Gastrocnemius medialis (tissue), 4 donors: ENCODE measurements at regions of chr1 and their contacts with region 1.

Region 1: DNA sequence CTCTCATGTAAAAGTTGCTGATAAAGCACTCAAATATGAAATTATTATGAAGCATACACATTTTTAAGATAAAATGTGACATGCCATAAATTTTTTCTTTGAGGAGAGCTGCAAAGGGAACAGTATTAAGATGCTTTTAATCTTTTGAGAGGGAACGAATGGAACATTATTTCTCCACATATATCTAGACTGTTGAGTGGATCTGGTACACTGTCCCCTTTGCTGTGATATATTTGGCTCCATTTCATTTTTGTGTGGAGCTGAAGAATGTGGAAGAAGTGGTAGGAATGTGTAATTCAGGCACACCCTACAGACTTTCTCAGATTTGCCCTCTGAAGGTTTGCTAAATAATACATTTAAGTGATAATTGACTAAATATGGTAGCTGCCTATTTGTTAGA is 31.7 kb downstream of the PGM1 start:
- DNase-seq: no peak
- ATAC-seq: no peak
- H3K4me3 ChIP-seq: peak overlapping the region in 1 of 4 donors; percentile 22
- H3K27ac ChIP-seq: peak overlapping the region in 3 of 4 donors; percentile 94 to 99 (median 98)
- H3K4me1 ChIP-seq: peaks cover 76 to 81% of the 10 kb centered on the region in 2 donors
- H3K27me3 ChIP-seq: no peaks in the 10 kb centered on the region
- CTCF ChIP-seq: peak in 1 of 5 experiments; percentile 11
- POLR2A ChIP-seq: no peak

Region 2: GRCh38 chr1:63512584-63512983 is 112.3 kb before region 1 on chr1:
- in situ Hi-C with region 1: no loop called
- intact Hi-C with region 1: no loop called
- DNase-seq: no peak
- ATAC-seq: no peak
- H3K4me3 ChIP-seq: no peak overlapping the region
- H3K27ac ChIP-seq: no peak overlapping the region
- H3K4me1 ChIP-seq: peaks cover 0 to 6% of the 10 kb centered on the region in 2 donors
- H3K27me3 ChIP-seq: no peaks in the 10 kb centered on the region
- CTCF ChIP-seq: no peak
- POLR2A ChIP-seq: no peak

Region 3: DNA sequence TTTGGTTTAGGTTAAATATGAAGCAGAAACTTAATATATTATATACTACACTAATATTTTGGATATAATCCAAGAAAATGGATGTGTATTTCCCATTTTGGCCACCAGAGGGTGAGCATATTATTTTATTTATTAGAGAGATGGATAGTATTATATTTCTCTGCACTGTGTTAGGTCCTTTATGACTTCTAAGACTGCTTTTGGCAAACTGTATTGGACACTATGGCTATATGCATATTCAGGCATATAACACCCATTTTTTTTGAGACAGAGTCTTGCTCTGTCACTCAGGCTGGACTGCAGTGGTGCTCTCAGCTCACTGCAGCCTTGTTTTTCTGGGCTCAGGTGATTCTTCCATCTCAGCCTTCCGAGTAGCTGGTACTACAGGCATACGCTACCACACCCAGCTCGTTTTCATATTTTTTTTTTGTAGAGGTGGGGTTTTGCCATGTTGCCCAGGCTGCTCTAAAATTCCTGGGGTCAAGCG is 49.5 kb before region 1 on chr1:
- in situ Hi-C with region 1: loop called in 2 of 4 experiments (anchors 5 to 10 kb)
- intact Hi-C with region 1: loop called (anchors 2 kb)
- DNase-seq: no peak
- ATAC-seq: peak; percentile 89 to 94
- H3K4me3 ChIP-seq: no peak overlapping the region
- H3K27ac ChIP-seq: peak overlapping the region in 1 of 4 donors; percentile 33
- H3K4me1 ChIP-seq: peaks cover 0 to 5% of the 10 kb centered on the region in 2 donors
- H3K27me3 ChIP-seq: no peaks in the 10 kb centered on the region
- CTCF ChIP-seq: peak; percentile 71 to 92 (median 82)
- POLR2A ChIP-seq: no peak

Region 4: GRCh38 chr1:63643926-63644325 is 19.0 kb after region 1 on chr1:
- in situ Hi-C with region 1: no loop called
- intact Hi-C with region 1: loop called (anchors 2 kb)
- DNase-seq: peak; percentile 84 to 86
- ATAC-seq: peak; percentile 83 to 88
- H3K4me3 ChIP-seq: no peak overlapping the region
- H3K27ac ChIP-seq: peak overlapping the region; percentile 79 to 95 (median 88)
- H3K4me1 ChIP-seq: peaks cover 62 to 76% of the 10 kb centered on the region in 2 donors
- H3K27me3 ChIP-seq: no peaks in the 10 kb centered on the region
- CTCF ChIP-seq: no peak
- POLR2A ChIP-seq: no peak

Region 5: DNA sequence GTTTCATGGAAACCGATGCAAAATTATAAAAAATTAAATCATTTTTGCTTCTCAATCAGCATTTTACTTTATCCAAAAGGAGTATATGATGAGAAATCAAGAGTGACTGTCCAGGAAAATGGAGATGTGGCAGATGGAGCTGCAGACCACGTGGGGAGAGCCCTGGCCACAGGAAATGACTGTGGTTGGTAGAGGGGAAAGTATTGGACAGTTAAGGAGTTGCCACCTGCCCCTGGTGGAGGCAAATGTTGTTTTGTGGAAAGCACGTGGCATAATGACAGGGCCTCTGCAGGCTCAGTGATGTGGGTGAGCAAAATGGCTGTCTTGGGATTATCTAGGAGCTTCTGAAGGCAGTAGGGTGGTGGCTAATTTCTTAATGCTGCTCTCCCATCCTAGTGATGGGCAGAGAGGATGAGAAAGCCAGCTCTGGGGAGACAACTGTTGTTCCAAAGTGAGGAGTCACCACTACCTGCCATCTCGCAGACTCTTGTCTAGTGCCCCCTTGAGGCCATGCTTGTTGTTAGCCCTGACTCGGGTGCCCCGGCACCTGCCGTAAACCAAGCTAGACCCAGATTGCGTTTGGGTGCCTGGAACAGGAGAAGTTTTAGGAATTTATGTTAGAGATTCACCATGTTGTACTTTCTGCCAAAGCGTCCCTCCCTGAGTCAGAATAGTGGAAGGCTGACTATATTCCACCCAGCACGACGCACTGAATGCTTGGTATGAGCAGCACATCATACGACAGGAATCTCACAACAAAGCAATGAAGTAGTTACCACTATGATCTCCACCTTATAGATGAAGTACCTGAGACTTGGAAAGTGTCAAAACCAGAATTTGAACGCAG is 292.9 kb after region 1 on chr1:
- in situ Hi-C with region 1: no loop called
- intact Hi-C with region 1: no loop called
- DNase-seq: no peak
- ATAC-seq: no peak
- H3K4me3 ChIP-seq: no peak overlapping the region
- H3K27ac ChIP-seq: no peak overlapping the region
- H3K4me1 ChIP-seq: peaks cover 11 to 13% of the 10 kb centered on the region in 2 donors
- H3K27me3 ChIP-seq: no peaks in the 10 kb centered on the region
- CTCF ChIP-seq: no peak
- POLR2A ChIP-seq: no peak